GM12878 (cell line): ENCODE measurements at regions of chr13 and their contacts with region 1.

Region 1: DNA sequence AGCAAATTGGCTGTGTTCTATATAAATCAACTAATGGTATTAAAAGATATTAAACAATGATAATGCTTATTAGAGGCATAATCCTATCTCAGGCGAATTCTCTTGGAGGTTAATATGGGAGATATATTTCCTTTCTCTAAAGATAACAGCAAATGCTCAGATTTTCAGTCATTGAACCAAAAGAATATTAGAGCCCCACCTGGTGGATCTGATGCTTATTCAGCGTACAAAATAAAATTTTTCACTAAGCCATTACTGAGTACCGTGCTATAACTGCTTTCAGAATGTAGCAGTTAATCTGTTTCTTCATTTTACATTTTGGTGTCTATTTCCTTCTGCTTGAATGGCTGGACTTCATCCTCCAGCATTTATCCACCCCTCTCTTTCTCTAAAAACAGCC is 143.3 kb upstream of the IPO5 start:
- DNase-seq: no peak
- ATAC-seq: no peak
- H3K4me3 ChIP-seq: no peak overlapping the region
- H3K27ac ChIP-seq: no peak overlapping the region
- H3K4me1 ChIP-seq: no peaks in the 10 kb centered on the region
- H3K27me3 ChIP-seq: no peaks in the 10 kb centered on the region
- CTCF ChIP-seq: peak in 1 of 3 experiments; percentile 17; a peak in 2 of 6 replicates
- EP300 ChIP-seq: no peak
- POLR2A ChIP-seq: no peak
- RAD21 ChIP-seq: peak; percentile 17; the same call in 1 of the 2 replicates

Region 2: DNA sequence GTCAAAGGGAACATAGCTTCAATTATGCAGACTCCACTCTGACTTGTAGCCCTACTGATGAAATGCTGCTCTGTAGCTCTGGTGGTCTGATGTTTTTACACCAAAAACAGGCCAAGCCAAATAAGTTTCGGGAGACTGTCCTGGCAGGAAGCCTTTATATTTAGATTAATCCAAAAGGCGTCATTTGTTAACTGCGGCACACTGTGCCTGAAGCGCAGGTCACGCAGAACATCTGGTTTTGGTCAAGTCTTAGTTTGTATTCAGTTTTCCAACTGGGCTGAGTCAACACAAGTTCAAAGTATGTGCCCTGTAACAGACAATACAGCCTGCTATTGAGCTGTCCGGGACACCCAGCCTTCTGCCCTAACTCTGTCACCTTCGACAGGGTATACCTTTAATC is 11.3 kb before region 1 on chr13:
- CTCF ChIA-PET with region 1: interaction called, 26 read pairs
- POLR2A ChIA-PET with region 1: no interaction called
- RAD21 ChIA-PET with region 1: no interaction called
- SMC1A ChIA-PET with region 1: no interaction called
- in situ Hi-C with region 1: no loop called
- intact Hi-C with region 1: no loop called
- DNase-seq: no peak
- ATAC-seq: no peak
- H3K4me3 ChIP-seq: no peak overlapping the region
- H3K27ac ChIP-seq: no peak overlapping the region
- H3K4me1 ChIP-seq: no peaks in the 10 kb centered on the region
- H3K27me3 ChIP-seq: no peaks in the 10 kb centered on the region
- CTCF ChIP-seq: no peak
- EP300 ChIP-seq: no peak
- POLR2A ChIP-seq: no peak
- RAD21 ChIP-seq: no peak

Region 3: GRCh38 chr13:97826421-97827012 is 16.4 kb after region 1 on chr13:
- CTCF ChIA-PET with region 1: no interaction called
- POLR2A ChIA-PET with region 1: no interaction called
- RAD21 ChIA-PET with region 1: no interaction called
- SMC1A ChIA-PET with region 1: no interaction called
- in situ Hi-C with region 1: no loop called
- intact Hi-C with region 1: no loop called
- DNase-seq: no peak
- ATAC-seq: no peak
- H3K4me3 ChIP-seq: no peak overlapping the region
- H3K27ac ChIP-seq: no peak overlapping the region
- H3K4me1 ChIP-seq: no peaks in the 10 kb centered on the region
- H3K27me3 ChIP-seq: peaks cover 0 to 1% of the 10 kb centered on the region in 2 experiments; a peak in 1 of 4 replicates
- CTCF ChIP-seq: no peak
- EP300 ChIP-seq: no peak
- POLR2A ChIP-seq: no peak
- RAD21 ChIP-seq: no peak